ENCODE measurements at regions of chr2 and their contacts with region 1.

Region 1: DNA sequence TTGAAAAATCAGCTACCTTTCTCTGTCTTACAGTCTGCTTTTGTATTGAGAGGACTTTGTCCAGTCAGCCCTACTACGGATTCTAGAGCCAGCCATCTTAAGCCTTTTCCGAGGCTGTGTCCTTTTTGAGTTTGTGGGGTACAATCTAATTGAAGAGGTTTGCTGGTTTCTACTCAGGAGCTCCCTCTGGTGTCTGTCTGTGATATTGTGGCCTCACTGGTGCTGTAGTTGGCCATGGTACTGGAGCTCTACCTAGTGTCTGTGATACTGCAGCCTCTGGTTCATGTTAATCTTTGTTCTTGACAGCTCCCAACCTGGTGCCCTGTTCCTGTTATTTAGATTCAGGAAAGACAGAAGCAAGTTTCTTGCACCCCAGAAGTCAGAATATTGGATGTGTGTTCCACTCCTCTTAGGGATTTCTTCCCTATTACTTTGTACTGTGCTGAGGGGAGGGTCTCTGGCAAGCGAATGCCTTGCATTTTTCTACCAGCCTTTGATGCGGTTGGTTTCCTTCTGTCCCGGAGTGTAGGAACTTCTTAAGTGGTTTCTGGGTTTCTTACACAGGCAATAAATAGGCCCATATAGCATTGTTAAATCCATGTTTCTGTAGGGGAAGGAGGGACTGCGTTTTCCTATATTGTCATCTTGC is 78.5 kb downstream of the ACSL3 start:
- DNase-seq: peak in 32 of 35 experiments; percentile 4 to 69 (median 33)
- ATAC-seq: peak; percentile 55 to 75 (median 58)
- H3K4me3 ChIP-seq: no peak overlapping the region
- H3K4me3 Mint-ChIP-seq: no peak overlapping the region
- H3K27ac ChIP-seq: no peak overlapping the region
- H3K27ac Mint-ChIP-seq: no peak overlapping the region
- H3K4me1 ChIP-seq: no peaks in the 10 kb centered on the region
- H3K4me1 Mint-ChIP-seq: no peaks in the 10 kb centered on the region
- H3K27me3 ChIP-seq: no peaks in the 10 kb centered on the region
- H3K27me3 Mint-ChIP-seq: no peaks in the 10 kb centered on the region

Region 2: DNA sequence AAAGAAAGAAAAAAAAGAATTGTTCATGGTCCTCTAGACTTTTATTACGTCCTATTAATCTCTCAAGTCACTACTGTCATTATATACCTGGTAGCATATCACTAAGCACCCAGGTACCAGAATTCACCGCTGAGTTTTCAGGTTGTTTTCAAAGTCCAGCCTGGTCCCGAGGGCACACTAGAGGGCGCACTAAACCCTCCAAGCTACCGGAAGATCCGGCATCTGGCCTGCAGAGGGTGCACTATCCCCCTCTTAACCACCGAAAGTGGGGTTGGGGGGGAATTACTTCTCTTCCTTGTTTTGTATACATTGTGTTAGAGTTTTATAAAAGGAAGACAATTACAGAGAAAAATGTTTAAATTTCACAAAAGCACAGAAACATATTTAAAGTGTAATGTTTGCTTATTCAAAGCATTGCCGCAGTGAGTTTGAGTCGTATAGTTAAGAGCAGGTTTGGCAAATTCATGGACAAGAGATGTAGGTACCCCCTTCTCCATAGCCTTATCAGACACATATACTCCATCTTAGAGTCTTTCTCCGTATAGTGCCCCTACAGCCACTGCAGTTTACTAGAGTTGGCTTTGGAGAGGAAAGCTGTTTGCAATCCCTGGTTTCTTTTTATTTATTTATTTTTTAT is 248.7 kb before region 1 on chr2:
- CTCF ChIA-PET with region 1: interaction called, 3 to 10 read pairs
- POLR2A ChIA-PET with region 1: no interaction called
- DNase-seq: peak; percentile 37 to 84 (median 68)
- ATAC-seq: peak; percentile 90 to 100 (median 92)
- H3K4me3 ChIP-seq: no peak overlapping the region
- H3K4me3 Mint-ChIP-seq: no peak overlapping the region
- H3K27ac ChIP-seq: no peak overlapping the region
- H3K27ac Mint-ChIP-seq: no peak overlapping the region
- H3K4me1 ChIP-seq: peaks cover 4 to 8% of the 10 kb centered on the region in 2 experiments
- H3K4me1 Mint-ChIP-seq: peaks cover 5 to 17% (median 14%) of the 10 kb centered on the region in 3 donors
- H3K27me3 ChIP-seq: peaks cover 0 to 7% of the 10 kb centered on the region in 2 experiments
- H3K27me3 Mint-ChIP-seq: peaks cover 0 to 6% of the 10 kb centered on the region in 2 donors

Region 3: GRCh38 chr2:222952204-222952603 is 12.9 kb after region 1 on chr2:
- CTCF ChIA-PET with region 1: interaction called in 1 of 2 experiments, 11 read pairs
- POLR2A ChIA-PET with region 1: interaction called in 1 of 2 experiments, 8 read pairs
- DNase-seq: no peak
- ATAC-seq: no peak
- H3K4me3 ChIP-seq: no peak overlapping the region
- H3K4me3 Mint-ChIP-seq: no peak overlapping the region
- H3K27ac ChIP-seq: no peak overlapping the region
- H3K27ac Mint-ChIP-seq: no peak overlapping the region
- H3K4me1 ChIP-seq: no peaks in the 10 kb centered on the region
- H3K4me1 Mint-ChIP-seq: no peaks in the 10 kb centered on the region
- H3K27me3 ChIP-seq: peaks cover 0 to 3% of the 10 kb centered on the region in 2 experiments
- H3K27me3 Mint-ChIP-seq: peaks cover 6 to 20% of the 10 kb centered on the region in 2 donors

Measured in T-cell (primary cell).